Right cardiac atrium (tissue), 5 donors: ENCODE measurements at regions of chr7 and their contacts with region 1.

Region 1: GRCh38 chr7:70668606-70669358 is 463.2 kb upstream of the GALNT17 start:
- DNase-seq: peak; percentile 51 to 74 (median 67)
- ATAC-seq: peak; percentile 94 to 95
- H3K4me3 ChIP-seq: no peak overlapping the region
- H3K27ac ChIP-seq: peak overlapping the region; percentile 1
- H3K4me1 ChIP-seq: peaks cover 3% of the 10 kb centered on the region
- H3K27me3 ChIP-seq: no peaks in the 10 kb centered on the region

Region 2: GRCh38 chr7:70614237-70615045 is 54.3 kb before region 1 on chr7:
- intact Hi-C with region 1: loop called in 1 of 4 experiments (anchors 10 kb)
- DNase-seq: peak; percentile 87 to 95 (median 94)
- ATAC-seq: peak; percentile 95 to 97
- H3K4me3 ChIP-seq: no peak overlapping the region
- H3K27ac ChIP-seq: peak overlapping the region; percentile 13
- H3K4me1 ChIP-seq: peaks cover 2% of the 10 kb centered on the region
- H3K27me3 ChIP-seq: no peaks in the 10 kb centered on the region

Region 3: DNA sequence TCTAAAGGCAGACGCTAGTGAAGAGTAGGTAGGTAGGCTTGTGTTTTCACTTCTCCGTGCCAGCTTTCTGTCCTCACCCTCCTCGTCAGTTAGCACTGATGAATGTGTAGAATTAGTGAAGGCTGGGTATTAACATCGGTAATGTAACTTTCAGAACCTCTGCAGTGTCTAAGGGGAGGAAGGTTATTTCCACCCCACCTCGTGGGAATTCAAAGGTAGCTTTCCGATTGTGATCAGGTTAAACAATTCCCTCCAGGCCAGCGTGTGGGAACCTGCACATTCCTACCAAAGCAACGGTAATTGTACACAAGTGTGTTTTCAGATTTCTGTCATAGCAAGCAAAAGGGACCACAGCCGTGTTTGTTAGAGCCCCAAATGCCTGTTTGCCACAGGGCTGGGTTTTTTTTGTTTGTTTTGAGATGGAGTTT is 58.2 kb after region 1 on chr7:
- intact Hi-C with region 1: no loop called
- DNase-seq: no peak
- ATAC-seq: no peak
- H3K4me3 ChIP-seq: no peak overlapping the region
- H3K27ac ChIP-seq: no peak overlapping the region
- H3K4me1 ChIP-seq: no peaks in the 10 kb centered on the region
- H3K27me3 ChIP-seq: no peaks in the 10 kb centered on the region